Activated CD8-positive, alpha-beta T cell treated with anti-CD3 and anti-CD28 coated beads, Interleukin-2, amount 10 ng/mL, durations not matched to agents 7 days and 5 days (primary cell): ENCODE measurements at regions of chr12 and their contacts with region 1.

Region 1: DNA sequence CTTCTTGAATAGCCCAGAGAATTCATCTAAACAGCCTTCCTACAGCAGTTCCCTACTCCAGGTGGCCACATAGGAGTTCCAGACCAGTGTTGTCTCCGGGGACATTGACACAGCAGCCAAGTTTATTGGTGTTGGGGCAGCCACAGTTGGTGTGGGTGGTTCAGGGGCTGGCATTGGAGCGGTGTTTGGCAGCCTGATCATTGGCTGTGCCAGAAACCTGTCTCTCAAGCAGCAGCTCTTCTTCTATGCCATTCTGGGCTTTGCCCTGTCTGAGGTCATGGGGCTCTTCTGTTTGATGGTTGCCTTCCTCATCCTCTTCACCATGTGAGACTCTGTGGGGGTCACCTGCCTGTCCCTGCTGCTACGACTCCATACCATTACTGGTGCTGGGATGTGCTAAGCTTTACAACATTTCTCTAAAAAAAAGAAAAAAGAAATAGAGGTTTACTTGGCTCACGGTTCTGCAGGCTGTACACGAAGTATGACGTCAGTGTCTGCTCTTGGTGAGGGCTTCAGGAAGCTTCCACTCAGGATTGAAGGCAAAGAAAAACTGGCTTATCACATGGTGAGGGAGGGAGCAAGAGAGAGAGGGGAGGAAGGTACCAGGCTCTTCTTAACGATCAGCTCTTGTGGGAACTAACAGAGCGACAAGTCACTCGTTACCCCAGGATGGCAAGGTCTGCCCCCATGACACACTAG is 57.5 kb downstream of the CHST11 start:
- DNase-seq: no peak
- ATAC-seq: no peak
- H3K4me3 Mint-ChIP-seq: no peak overlapping the region
- H3K27ac Mint-ChIP-seq: no peak overlapping the region
- H3K4me1 Mint-ChIP-seq: peaks cover 82% of the 10 kb centered on the region
- H3K27me3 Mint-ChIP-seq: no peaks in the 10 kb centered on the region

Region 2: GRCh38 chr12:104501660-104502059 is 12.6 kb before region 1 on chr12:
- CTCF ChIA-PET with region 1: interaction called, 28 read pairs
- POLR2A ChIA-PET with region 1: no interaction called
- DNase-seq: no peak
- ATAC-seq: peak; percentile 23
- H3K4me3 Mint-ChIP-seq: no peak overlapping the region
- H3K27ac Mint-ChIP-seq: no peak overlapping the region
- H3K4me1 Mint-ChIP-seq: peaks cover 94% of the 10 kb centered on the region
- H3K27me3 Mint-ChIP-seq: no peaks in the 10 kb centered on the region

Region 3: DNA sequence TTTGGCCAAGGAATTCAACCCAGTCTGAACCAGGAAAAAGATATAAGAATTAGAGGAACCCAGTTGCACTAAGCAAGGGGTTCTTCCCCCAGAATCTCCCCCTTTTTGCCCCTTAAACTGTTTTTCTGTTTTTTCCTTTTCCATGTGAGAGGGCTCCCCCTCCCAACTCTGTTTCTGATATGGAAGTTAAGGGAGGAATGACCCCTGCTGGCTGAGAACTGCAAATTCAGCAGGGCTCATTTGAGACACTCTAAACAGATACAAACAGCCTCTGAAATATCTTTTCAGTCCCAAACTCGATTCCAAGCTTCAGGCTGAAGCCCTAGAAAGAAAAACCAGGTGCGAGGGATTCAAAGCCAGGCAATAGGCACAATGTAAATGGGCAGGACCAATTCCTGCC is 311.1 kb after region 1 on chr12:
- CTCF ChIA-PET with region 1: no interaction called
- POLR2A ChIA-PET with region 1: no interaction called
- DNase-seq: no peak
- ATAC-seq: no peak
- H3K4me3 Mint-ChIP-seq: no peak overlapping the region
- H3K27ac Mint-ChIP-seq: no peak overlapping the region
- H3K4me1 Mint-ChIP-seq: no peaks in the 10 kb centered on the region
- H3K27me3 Mint-ChIP-seq: no peaks in the 10 kb centered on the region